CD4-positive, alpha-beta memory T cell (primary cell): ENCODE measurements at regions of chr3 and their contacts with region 1.

Region 1: DNA sequence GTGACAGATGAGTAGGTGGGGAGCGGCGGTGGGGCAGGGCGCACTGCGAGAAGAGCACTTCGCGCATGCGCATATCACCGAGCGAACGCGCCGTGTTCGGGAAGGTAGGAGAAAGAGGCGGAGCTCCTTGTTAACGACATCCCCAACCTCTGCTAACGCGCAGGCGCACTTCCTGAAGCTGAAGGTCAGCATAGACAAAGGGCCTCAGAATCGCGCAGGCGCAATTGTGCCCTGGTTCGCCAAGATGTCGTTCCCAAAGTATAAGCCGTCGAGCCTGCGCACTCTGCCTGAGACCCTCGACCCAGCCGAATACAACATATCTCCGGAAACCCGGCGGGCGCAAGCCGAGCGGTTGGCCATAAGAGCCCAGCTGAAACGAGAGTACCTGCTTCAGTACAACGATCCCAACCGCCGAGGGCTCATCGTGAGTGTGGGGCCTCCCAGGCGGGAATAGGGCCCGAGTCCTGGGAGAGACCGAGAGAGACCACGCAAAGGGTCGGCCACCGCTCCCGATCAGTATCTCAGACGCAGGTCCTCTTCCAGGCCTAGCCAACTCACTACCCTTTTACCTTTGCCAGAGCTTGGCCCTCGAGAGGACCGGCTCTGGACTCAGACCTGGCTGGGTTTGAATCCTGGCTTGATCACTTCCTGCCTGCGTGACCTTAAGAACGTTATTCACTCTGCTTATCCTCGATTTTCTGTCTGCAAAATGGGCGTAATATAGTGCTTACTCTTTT is at the start of gene NDUFB4:
- DNase-seq: peak; percentile 89 to 96 (median 96)
- H3K4me3 ChIP-seq: peak within 1 kb of the TSS; percentile 97 to 99
- H3K4me3 Mint-ChIP-seq: peak within 1 kb of the TSS; percentile 91 to 98 (median 95)
- H3K27ac ChIP-seq: peak within 1 kb of the TSS; percentile 98
- H3K27ac Mint-ChIP-seq: peak within 1 kb of the TSS in 6 of 7 donors; percentile 96 to 99 (median 98)
- H3K4me1 ChIP-seq: peaks cover 30% of the 10 kb centered on the region
- H3K4me1 Mint-ChIP-seq: peaks cover 6 to 8% (median 7%) of the 10 kb centered on the region in 4 donors
- H3K27me3 ChIP-seq: no peaks in the 10 kb centered on the region
- H3K27me3 Mint-ChIP-seq: no peaks in the 10 kb centered on the region
- total RNA-seq, gene NDUFB4: 82.1 to 82.8 TPM

Region 2: GRCh38 chr3:120567370-120568201 is 28.7 kb before region 1 on chr3:
- CTCF ChIA-PET with region 1: interaction called, 15 read pairs
- POLR2A ChIA-PET with region 1: interaction called, 6 read pairs
- intact Hi-C with region 1: no loop called
- DNase-seq: no peak
- H3K4me3 ChIP-seq: no peak overlapping the region
- H3K4me3 Mint-ChIP-seq: peak overlapping the region in 7 of 8 donors; percentile 27 to 81 (median 59)
- H3K27ac ChIP-seq: no peak overlapping the region
- H3K27ac Mint-ChIP-seq: peak overlapping the region in 4 of 7 donors; percentile 10 to 75 (median 39)
- H3K4me1 ChIP-seq: no peaks in the 10 kb centered on the region
- H3K4me1 Mint-ChIP-seq: peaks cover 0 to 3% (median 1%) of the 10 kb centered on the region in 4 donors
- H3K27me3 ChIP-seq: no peaks in the 10 kb centered on the region
- H3K27me3 Mint-ChIP-seq: peaks cover 2 to 9% of the 10 kb centered on the region in 2 donors

Region 3: GRCh38 chr3:120615847-120616599 is 19.7 kb after region 1 on chr3:
- CTCF ChIA-PET with region 1: no interaction called
- POLR2A ChIA-PET with region 1: no interaction called
- intact Hi-C with region 1: no loop called
- DNase-seq: no peak
- H3K4me3 ChIP-seq: no peak overlapping the region
- H3K4me3 Mint-ChIP-seq: no peak overlapping the region
- H3K27ac ChIP-seq: no peak overlapping the region
- H3K27ac Mint-ChIP-seq: peak overlapping the region in 1 of 7 donors; percentile 31
- H3K4me1 ChIP-seq: no peaks in the 10 kb centered on the region
- H3K4me1 Mint-ChIP-seq: no peaks in the 10 kb centered on the region
- H3K27me3 ChIP-seq: no peaks in the 10 kb centered on the region
- H3K27me3 Mint-ChIP-seq: peaks cover 2 to 7% of the 10 kb centered on the region in 2 donors